Heart left ventricle (tissue), 16 donors: ENCODE measurements at regions of chr6 and their contacts with region 1.

Region 1: GRCh38 chr6:141562851-141563763 is 569.6 kb upstream of the GJE1 start:
- DNase-seq: peak in 4 of 5 donors; percentile 49 to 71 (median 58)
- ATAC-seq: peak; percentile 93 to 95 (median 94)
- H3K4me3 ChIP-seq: peak overlapping the region in 11 of 12 donors; percentile 8 to 52 (median 41)
- H3K27ac ChIP-seq: peak overlapping the region; percentile 43 to 85 (median 70)
- H3K4me1 ChIP-seq: peaks cover 0 to 18% (median 10%) of the 10 kb centered on the region in 12 donors
- H3K27me3 ChIP-seq: no peaks in the 10 kb centered on the region
- CTCF ChIP-seq: peak; percentile 82 to 95 (median 90)
- POLR2A ChIP-seq: no peak

Region 2: DNA sequence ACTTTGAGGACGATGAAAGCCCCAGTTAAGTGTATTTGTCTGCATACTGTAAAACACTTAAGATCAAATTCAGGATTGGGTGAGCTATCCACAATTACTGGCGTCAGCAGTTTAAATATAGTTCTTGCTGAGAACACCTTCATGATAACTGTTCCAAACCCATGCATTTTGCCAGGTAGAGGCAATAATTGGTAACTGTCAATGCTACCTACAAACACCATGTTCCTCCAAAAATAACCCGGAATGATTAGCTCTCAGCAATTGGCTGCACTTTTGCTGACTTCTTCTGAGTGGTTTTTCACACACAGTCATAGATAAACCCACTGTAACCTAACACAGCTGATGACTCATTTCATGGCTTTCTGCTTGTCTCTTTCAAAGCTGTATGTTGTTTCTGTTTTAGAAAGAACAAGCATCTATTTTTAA is 789.0 kb before region 1 on chr6:
- intact Hi-C with region 1: loop called in 1 of 10 experiments (anchors 10 kb)
- DNase-seq: peak in 4 of 5 donors; percentile 34 to 44 (median 36)
- ATAC-seq: peak; percentile 95 to 99 (median 98)
- H3K4me3 ChIP-seq: no peak overlapping the region
- H3K27ac ChIP-seq: peak overlapping the region; percentile 29 to 86 (median 64)
- H3K4me1 ChIP-seq: peaks cover 0 to 25% (median 8%) of the 10 kb centered on the region in 12 donors
- H3K27me3 ChIP-seq: no peaks in the 10 kb centered on the region
- CTCF ChIP-seq: no peak
- POLR2A ChIP-seq: no peak

Region 3: DNA sequence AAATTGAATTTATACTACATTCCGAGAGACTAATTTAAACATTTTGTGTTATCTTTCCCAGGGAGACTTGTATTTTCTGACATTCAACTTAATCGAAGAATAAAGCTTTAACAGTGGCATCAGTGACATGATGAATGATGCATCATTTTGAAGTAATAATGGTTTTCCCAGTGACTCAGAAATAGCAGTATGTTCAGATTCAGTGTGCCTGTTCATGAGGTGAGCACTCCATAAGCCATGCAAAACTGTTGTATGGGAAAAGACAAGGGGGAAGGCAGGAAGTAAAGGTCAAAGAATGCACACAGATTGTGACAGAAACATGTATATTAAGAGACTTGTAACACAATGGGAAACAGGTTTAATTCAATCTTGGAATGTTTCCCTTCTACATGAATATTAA is 778.5 kb before region 1 on chr6:
- intact Hi-C with region 1: loop called in 2 of 10 experiments (anchors 5 to 10 kb)
- DNase-seq: no peak
- ATAC-seq: no peak
- H3K4me3 ChIP-seq: no peak overlapping the region
- H3K27ac ChIP-seq: no peak overlapping the region
- H3K4me1 ChIP-seq: no peaks in the 10 kb centered on the region
- H3K27me3 ChIP-seq: no peaks in the 10 kb centered on the region
- CTCF ChIP-seq: no peak
- POLR2A ChIP-seq: no peak

Region 4: DNA sequence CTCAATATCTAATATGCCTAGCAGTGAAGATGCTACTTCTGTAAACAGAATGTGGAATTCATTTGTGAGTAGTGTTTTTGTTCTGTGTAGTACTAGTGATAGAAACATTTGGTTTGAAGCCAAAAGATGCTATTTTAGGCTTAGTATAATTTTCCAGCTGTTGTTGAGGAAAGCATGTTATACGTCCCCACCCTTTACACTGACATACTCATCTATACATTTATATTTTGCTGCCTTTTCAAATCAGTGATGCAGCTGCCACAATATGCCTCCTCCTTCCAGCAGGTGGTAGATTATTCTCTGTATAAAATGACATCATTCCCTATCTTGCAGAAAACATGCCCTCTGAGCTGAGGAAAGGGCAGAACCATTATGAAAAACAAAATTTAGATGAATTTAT is 648.0 kb before region 1 on chr6:
- intact Hi-C with region 1: loop called in 3 of 10 experiments (anchors 10 kb)
- DNase-seq: no peak
- ATAC-seq: peak in 2 of 4 donors; percentile 24 to 46
- H3K4me3 ChIP-seq: no peak overlapping the region
- H3K27ac ChIP-seq: peak overlapping the region in 4 of 12 donors; percentile 11 to 35 (median 26)
- H3K4me1 ChIP-seq: peaks cover 0 to 17% (median 11%) of the 10 kb centered on the region in 12 donors
- H3K27me3 ChIP-seq: no peaks in the 10 kb centered on the region
- CTCF ChIP-seq: peak in 5 of 12 donors; percentile 7 to 31 (median 19)
- POLR2A ChIP-seq: no peak

Region 5: DNA sequence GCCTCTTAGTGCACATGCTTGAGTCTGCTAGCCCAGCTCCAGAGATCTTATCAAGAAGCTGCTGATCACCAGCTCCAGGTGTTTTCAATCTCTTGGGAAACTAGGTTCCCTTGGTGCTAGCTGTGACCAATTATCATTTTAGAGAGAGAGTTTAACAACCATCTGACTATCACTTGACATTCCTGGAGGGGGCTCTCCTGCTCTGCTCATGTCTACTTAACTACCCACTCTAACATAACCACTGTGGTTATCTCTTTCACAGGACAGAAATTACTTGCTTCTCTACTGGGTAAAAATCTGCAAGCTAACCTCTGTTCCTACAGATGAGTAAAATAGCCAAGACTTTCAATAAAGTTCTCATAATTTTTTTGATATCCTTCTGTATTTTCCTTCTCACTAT is 253.8 kb before region 1 on chr6:
- intact Hi-C with region 1: loop called in 4 of 10 experiments (anchors 5 to 10 kb)
- DNase-seq: no peak
- ATAC-seq: peak in 2 of 4 donors; percentile 58 to 62
- H3K4me3 ChIP-seq: no peak overlapping the region
- H3K27ac ChIP-seq: no peak overlapping the region
- H3K4me1 ChIP-seq: peaks cover 0 to 4% (median 0%) of the 10 kb centered on the region in 12 donors
- H3K27me3 ChIP-seq: no peaks in the 10 kb centered on the region
- CTCF ChIP-seq: peak in 5 of 12 donors; percentile 10 to 27 (median 19)
- POLR2A ChIP-seq: no peak